ENCODE measurements at regions of chr13 and their contacts with region 1.

Region 1: DNA sequence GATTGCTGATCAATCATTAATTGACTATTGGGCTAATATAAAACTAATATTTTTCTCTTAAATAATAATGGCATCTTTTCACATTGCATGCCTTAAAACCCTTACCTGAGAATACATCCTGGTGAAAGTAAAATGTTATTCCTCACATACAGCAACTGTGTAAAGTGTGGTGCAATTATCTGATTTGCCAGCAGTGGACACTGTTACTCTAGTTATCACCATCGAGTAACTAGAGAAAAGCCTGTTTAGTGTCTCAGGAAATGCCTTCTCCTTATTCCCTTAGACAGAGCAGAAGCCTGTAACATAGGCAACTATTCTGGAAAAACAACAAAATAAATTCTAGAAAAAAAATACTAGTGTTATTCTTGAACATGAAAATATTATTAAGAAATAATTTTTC is 459.8 kb downstream of the FGF14 start:
- DNase-seq: peak; percentile 7
- ATAC-seq: peak; percentile 73
- H3K4me3 ChIP-seq: no peak overlapping the region
- H3K27ac ChIP-seq: no peak overlapping the region
- H3K4me1 ChIP-seq: no peaks in the 10 kb centered on the region
- H3K27me3 ChIP-seq: no peaks in the 10 kb centered on the region
- CTCF ChIP-seq: peak; percentile 58
- EP300 ChIP-seq: no peak
- POLR2A ChIP-seq: no peak
- RAD21 ChIP-seq: peak; percentile 38; the same call in 1 of the 2 replicates

Region 2: GRCh38 chr13:101785858-101786257 is 156.2 kb before region 1 on chr13:
- CTCF ChIA-PET with region 1: interaction called, 5 read pairs
- POLR2A ChIA-PET with region 1: no interaction called
- in situ Hi-C with region 1: no loop called
- intact Hi-C with region 1: loop called (anchors 1 kb)
- DNase-seq: peak; percentile 17
- ATAC-seq: peak; percentile 94
- H3K4me3 ChIP-seq: no peak overlapping the region
- H3K27ac ChIP-seq: no peak overlapping the region
- H3K4me1 ChIP-seq: no peaks in the 10 kb centered on the region
- H3K27me3 ChIP-seq: no peaks in the 10 kb centered on the region; a peak in 2 of 5 replicates
- CTCF ChIP-seq: peak; percentile 51
- EP300 ChIP-seq: no peak
- POLR2A ChIP-seq: no peak
- RAD21 ChIP-seq: 0 out of 2 replicates have a peak, but pooled peaks have one; percentile 23

Region 3: DNA sequence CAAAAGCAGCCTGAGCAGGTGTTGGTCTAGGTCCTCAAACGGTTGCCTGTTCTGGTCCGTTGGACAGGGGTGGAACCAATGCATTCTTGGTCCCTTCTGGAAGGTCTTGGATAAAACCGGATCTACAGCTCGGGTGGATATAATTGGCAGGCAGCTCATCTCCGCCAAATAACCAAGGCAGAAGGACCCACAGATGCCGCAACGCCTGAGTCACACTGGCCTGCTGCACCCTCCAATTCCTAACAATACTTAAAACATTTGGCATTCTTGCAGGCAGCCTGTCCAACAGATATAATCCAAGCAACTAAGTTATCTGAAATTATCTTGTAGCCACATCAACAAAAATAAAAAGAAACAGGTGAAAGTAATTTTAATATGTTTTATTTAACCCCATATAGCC is 518.8 kb after region 1 on chr13:
- CTCF ChIA-PET with region 1: no interaction called
- POLR2A ChIA-PET with region 1: no interaction called
- in situ Hi-C with region 1: no loop called
- intact Hi-C with region 1: loop called (anchors 1 kb)
- DNase-seq: no peak
- ATAC-seq: no peak
- H3K4me3 ChIP-seq: no peak overlapping the region
- H3K27ac ChIP-seq: no peak overlapping the region
- H3K4me1 ChIP-seq: 0 out of 2 replicates have a peak, but pooled peaks cover 6% of the 10 kb centered on the region
- H3K27me3 ChIP-seq: peaks cover 0 to 4% of the 10 kb centered on the region in 2 experiments; a peak in 1 of 5 replicates
- CTCF ChIP-seq: no peak
- EP300 ChIP-seq: no peak
- POLR2A ChIP-seq: no peak
- RAD21 ChIP-seq: no peak